ENCODE measurements at regions of chr10 and their contacts with region 1.

Region 1: GRCh38 chr10:101818119-101818871 is at the start of gene OGA:
- DNase-seq: peak; percentile 95 to 99
- H3K4me3 ChIP-seq: peak within 1 kb of the TSS; percentile 77 to 98 (median 90)
- H3K27ac ChIP-seq: peak within 1 kb of the TSS; percentile 100
- H3K4me1 ChIP-seq: peaks cover 0 to 5% (median 0%) of the 10 kb centered on the region in 4 experiments; a peak in 3 of 7 replicates
- H3K27me3 ChIP-seq: no peaks in the 10 kb centered on the region
- CTCF ChIP-seq: no peak
- EP300 ChIP-seq: peak in 1 of 2 experiments; percentile 100; a peak in 2 of 3 replicates
- POLR2A ChIP-seq: peak; percentile 83 to 88
- RAD21 ChIP-seq: no peak
- total RNA-seq, gene OGA: 104 and 107 TPM in 2 replicates

Region 2: DNA sequence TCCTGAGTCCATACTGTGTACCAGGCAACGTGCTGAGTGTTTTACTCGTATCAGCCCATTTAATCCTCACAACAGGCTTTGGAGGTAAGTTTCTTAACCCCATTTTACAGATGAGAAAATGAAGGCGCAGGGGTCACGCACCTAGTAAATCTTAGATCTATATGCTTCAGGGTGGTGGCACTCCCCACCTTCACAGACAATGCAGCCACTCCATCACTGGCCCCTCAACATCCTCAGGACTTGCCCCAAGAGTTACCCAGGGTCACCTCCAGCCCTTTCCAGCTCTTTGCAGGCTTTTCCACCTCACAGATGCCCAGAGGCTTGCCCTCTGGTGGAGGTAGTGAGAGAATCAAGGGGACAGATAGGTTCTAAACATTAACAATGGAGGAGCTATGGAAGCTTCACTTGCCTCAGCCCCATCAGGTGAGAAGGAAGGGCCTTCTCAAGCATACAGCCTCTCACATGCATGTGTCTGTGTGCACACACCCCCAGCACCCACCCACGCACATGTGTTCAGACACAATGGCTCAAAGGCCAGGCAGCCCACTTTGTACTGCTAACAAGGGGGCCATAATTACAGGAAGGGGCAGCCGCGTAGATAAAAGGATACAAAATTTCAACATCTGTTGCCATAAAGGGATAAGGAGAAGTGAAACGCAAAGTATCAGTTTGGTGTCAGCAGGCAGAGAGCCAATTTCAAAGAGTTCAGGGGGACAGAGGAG is 201.0 kb before region 1 on chr10:
- CTCF ChIA-PET with region 1: no interaction called
- POLR2A ChIA-PET with region 1: interaction called, 10 read pairs
- DNase-seq: no peak
- H3K4me3 ChIP-seq: no peak overlapping the region
- H3K27ac ChIP-seq: no peak overlapping the region
- H3K4me1 ChIP-seq: peaks cover 5 to 17% (median 13%) of the 10 kb centered on the region in 4 experiments
- H3K27me3 ChIP-seq: no peaks in the 10 kb centered on the region
- CTCF ChIP-seq: peak; percentile 21 to 50 (median 37)
- EP300 ChIP-seq: no peak
- POLR2A ChIP-seq: no peak
- RAD21 ChIP-seq: peak; percentile 26 to 46; a peak in 3 of 4 replicates

Region 3: DNA sequence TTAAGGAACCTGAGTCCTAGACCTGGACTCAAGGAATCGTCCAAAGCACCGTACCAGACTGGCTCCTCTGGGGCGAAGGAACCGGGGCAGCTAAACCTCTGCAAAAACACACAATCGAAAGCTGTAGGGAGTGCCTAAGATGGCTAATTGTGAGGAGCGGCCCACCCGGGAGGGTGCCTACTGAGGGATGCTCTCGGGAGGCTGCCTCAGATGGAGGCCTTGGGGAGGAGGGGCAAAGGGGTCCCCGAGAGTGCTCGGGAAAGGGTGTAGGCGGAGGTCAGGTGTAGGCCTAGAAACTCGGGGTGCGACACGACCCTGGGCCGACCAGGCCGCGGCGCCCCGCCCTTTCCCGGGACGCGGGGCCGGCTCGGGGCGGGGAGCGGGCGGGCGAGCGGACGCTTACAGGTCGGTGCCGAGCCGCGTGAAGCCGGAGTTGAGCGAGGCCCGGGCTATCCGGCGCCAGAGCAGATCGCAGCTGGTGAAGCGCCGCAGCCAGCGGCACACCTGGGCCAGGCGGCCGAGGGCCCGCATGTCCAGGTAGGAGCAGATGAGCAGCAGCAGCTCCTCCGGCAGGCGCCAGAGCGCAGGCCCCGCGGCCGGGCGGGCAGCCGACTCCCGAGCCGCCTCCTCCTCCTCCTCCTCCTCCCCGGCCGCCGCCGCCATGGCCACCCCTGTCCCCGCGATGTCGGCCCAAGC is 124.2 kb before region 1 on chr10:
- CTCF ChIA-PET with region 1: no interaction called
- POLR2A ChIA-PET with region 1: interaction called, 12 read pairs
- DNase-seq: no peak
- H3K4me3 ChIP-seq: peak overlapping the region; percentile 74 to 93 (median 81)
- H3K27ac ChIP-seq: peak overlapping the region; percentile 95
- H3K4me1 ChIP-seq: peaks cover 3 to 12% (median 3%) of the 10 kb centered on the region in 4 experiments; a peak in 5 of 7 replicates
- H3K27me3 ChIP-seq: no peaks in the 10 kb centered on the region
- CTCF ChIP-seq: no peak
- EP300 ChIP-seq: no peak
- POLR2A ChIP-seq: peak; percentile 74 to 86
- RAD21 ChIP-seq: no peak

Region 4: GRCh38 chr10:101797403-101798059 is 20.8 kb before region 1 on chr10:
- CTCF ChIA-PET with region 1: interaction called, 3 read pairs
- POLR2A ChIA-PET with region 1: interaction called, 14 read pairs
- DNase-seq: no peak
- H3K4me3 ChIP-seq: no peak overlapping the region
- H3K27ac ChIP-seq: no peak overlapping the region
- H3K4me1 ChIP-seq: no peaks in the 10 kb centered on the region
- H3K27me3 ChIP-seq: no peaks in the 10 kb centered on the region
- CTCF ChIP-seq: no peak
- EP300 ChIP-seq: no peak
- POLR2A ChIP-seq: no peak
- RAD21 ChIP-seq: no peak

Region 5: GRCh38 chr10:101830322-101831168 is 12.2 kb after region 1 on chr10:
- CTCF ChIA-PET with region 1: interaction called, 46 read pairs
- POLR2A ChIA-PET with region 1: interaction called, 100 read pairs
- DNase-seq: peak in 1 of 2 experiments; percentile 90
- H3K4me3 ChIP-seq: peak overlapping the region; percentile 44 to 66 (median 48)
- H3K27ac ChIP-seq: no peak overlapping the region
- H3K4me1 ChIP-seq: peaks cover 9 to 22% (median 17%) of the 10 kb centered on the region in 4 experiments
- H3K27me3 ChIP-seq: no peaks in the 10 kb centered on the region
- CTCF ChIP-seq: no peak
- EP300 ChIP-seq: no peak
- POLR2A ChIP-seq: no peak
- RAD21 ChIP-seq: no peak

Measured in H1 (cell line).